ENCODE measurements at regions of chr12 and their contacts with region 1.

Region 1: DNA sequence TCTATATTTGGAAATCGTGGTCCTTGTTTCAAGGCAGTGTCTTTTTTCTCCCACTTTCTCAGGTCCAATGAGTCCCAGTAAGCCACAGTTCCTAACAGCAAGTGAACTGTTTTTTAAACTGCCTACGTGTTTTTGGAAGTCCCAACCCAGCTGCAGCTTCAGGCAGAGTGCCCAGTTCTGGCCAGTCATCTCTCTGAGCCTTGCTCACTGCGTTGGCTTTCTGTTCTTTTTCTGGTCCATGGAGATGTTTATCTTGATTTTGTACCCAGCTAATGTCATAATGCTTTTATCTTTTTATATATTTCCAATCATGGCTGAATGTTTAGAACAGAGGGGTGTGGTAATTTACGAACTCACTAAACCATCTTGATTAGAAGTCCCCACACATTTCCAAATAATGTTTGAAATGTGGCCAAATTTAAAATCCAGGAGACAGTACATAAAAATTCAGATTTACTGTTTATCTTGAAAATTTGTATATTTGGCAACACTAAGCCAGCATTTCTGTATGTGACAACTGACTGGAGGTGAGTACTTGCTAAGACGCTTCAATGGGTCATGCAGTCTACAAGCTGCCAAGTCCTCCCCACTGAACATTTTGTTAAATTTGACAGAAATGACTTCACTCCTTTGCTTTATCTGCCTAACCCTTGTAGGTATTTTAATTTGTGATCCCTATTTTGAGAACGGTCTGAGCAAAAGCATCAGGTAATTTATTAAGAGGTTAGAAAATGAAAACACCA is 46.1 kb upstream of the OTOGL start:
- DNase-seq: peak; percentile 54
- H3K4me3 ChIP-seq: no peak overlapping the region
- H3K27ac ChIP-seq: peak overlapping the region; percentile 37 to 74 (median 64)
- H3K4me1 ChIP-seq: peaks cover 0 to 15% (median 7%) of the 10 kb centered on the region in 4 donors
- H3K27me3 ChIP-seq: no peaks in the 10 kb centered on the region
- CTCF ChIP-seq: no peak
- EP300 ChIP-seq: no peak
- POLR2A ChIP-seq: no peak

Region 2: GRCh38 chr12:79935021-79935623 is 118.1 kb before region 1 on chr12 and contains the start of gene PPP1R12A:
- in situ Hi-C with region 1: no loop called
- intact Hi-C with region 1: loop called (anchors 10 kb)
- DNase-seq: peak; percentile 97
- H3K4me3 ChIP-seq: peak within 1 kb of the TSS; percentile 76 to 96 (median 87)
- H3K27ac ChIP-seq: peak within 1 kb of the TSS; percentile 96 to 99 (median 97)
- H3K4me1 ChIP-seq: peaks cover 10 to 48% (median 20%) of the 10 kb centered on the region in 4 donors
- H3K27me3 ChIP-seq: no peaks in the 10 kb centered on the region
- CTCF ChIP-seq: peak in 3 of 5 experiments; percentile 13 to 50 (median 18)
- EP300 ChIP-seq: no peak
- POLR2A ChIP-seq: peak; percentile 99
- total RNA-seq, gene PPP1R12A: 100 to 121 (median 113) TPM

Measured in transverse colon (tissue), 4 donors.